ENCODE measurements at regions of chr3 and their contacts with region 1.

Region 1: DNA sequence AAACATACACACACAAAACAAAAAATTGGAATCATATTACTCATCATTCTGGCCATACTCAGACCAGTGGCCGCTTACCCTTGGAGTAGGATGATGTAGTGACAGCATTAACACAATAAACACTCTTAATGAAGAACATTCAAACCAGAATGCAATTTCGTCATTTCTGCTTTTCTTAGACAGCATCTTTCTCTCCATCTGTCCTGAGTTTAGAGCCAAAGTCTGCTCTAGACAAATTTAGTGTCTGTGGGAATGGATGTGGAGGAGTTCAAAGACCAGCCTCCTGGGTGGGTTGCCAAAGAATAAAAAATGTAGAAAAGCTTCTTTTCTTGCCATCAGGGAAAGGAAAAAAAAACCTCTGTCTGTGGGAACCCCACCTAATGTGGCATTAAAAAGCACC is 212.4 kb upstream of the POU1F1 start:
- DNase-seq: no peak
- ATAC-seq: no peak
- H3K4me3 ChIP-seq: no peak overlapping the region
- H3K27ac ChIP-seq: no peak overlapping the region
- H3K4me1 ChIP-seq: no peaks in the 10 kb centered on the region
- H3K27me3 ChIP-seq: no peaks in the 10 kb centered on the region
- CTCF ChIP-seq: no peak
- POLR2A ChIP-seq: no peak

Region 2: GRCh38 chr3:86673991-86674390 is 814.8 kb before region 1 on chr3:
- intact Hi-C with region 1: no loop called
- DNase-seq: no peak
- ATAC-seq: no peak
- H3K4me3 ChIP-seq: no peak overlapping the region
- H3K27ac ChIP-seq: no peak overlapping the region
- H3K4me1 ChIP-seq: no peaks in the 10 kb centered on the region
- H3K27me3 ChIP-seq: no peaks in the 10 kb centered on the region
- CTCF ChIP-seq: no peak
- POLR2A ChIP-seq: no peak

Region 3: DNA sequence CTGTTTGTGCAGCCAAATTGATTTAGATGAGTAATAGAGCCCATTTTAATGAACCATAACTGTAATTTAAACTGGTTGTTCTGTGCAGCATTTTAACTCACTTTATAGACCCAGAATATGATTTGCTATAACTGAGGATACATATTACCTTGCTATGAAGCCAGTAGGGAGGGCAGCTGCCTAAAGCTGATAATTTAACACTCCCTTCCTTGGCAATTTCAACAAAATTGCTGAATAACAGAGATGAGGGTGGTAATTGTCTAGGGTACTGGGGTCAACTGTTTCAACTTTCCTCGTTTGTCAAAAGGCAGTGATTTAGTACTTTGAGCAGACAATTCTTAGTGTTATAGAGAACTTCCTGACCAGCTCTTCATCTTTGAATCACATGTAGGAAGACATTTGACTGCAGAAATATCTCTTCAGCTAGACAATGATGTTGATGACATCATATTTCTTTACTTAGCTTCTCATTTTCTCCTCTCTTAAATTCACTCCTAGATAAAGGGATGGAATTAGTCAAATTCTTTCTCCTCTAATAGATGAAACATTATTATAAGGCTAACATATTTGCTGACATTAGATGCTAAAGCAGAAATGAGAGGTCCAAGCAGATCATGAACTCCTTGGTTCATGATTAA is 92.6 kb after region 1 on chr3:
- intact Hi-C with region 1: no loop called
- DNase-seq: no peak
- ATAC-seq: no peak
- H3K4me3 ChIP-seq: no peak overlapping the region
- H3K27ac ChIP-seq: no peak overlapping the region
- H3K4me1 ChIP-seq: no peaks in the 10 kb centered on the region
- H3K27me3 ChIP-seq: no peaks in the 10 kb centered on the region
- CTCF ChIP-seq: no peak
- POLR2A ChIP-seq: no peak

Region 4: GRCh38 chr3:87607234-87607633 is 118.5 kb after region 1 on chr3:
- intact Hi-C with region 1: no loop called
- DNase-seq: no peak
- ATAC-seq: no peak
- H3K4me3 ChIP-seq: no peak overlapping the region
- H3K27ac ChIP-seq: no peak overlapping the region
- H3K4me1 ChIP-seq: no peaks in the 10 kb centered on the region
- H3K27me3 ChIP-seq: no peaks in the 10 kb centered on the region
- CTCF ChIP-seq: no peak
- POLR2A ChIP-seq: no peak

Region 5: DNA sequence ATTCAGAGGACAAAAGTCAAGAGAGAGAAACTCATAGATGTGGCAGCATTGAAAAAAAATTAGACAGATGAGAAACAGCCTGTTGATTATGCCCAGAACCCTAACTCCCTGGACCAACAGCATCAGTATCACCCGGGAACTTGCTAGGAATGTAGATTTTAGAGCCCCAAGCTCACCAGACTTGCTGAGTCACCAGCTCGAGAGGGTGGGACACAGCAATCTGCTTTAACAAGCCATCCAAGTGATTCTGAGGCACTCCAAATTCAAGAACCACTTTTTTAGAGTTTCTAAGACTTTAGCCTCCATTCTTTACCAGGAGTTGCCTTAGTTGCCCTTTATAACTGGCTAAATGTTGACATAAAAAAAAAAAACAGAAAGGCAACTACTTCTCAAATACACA is 499.2 kb after region 1 on chr3:
- intact Hi-C with region 1: loop called in 1 of 10 experiments (anchors 5 kb)
- DNase-seq: no peak
- ATAC-seq: no peak
- H3K4me3 ChIP-seq: no peak overlapping the region
- H3K27ac ChIP-seq: no peak overlapping the region
- H3K4me1 ChIP-seq: no peaks in the 10 kb centered on the region
- H3K27me3 ChIP-seq: no peaks in the 10 kb centered on the region
- CTCF ChIP-seq: no peak
- POLR2A ChIP-seq: no peak